AG04449 (cell line): ENCODE measurements at regions of chr12 and their contacts with region 1.

Region 1: GRCh38 chr12:69254046-69254445 is 14.7 kb downstream of the CPSF6 start:
- DNase-seq: no peak
- H3K4me3 ChIP-seq: no peak overlapping the region
- CTCF ChIP-seq: peak; percentile 24

Region 2: GRCh38 chr12:69243099-69244084 is 10.7 kb before region 1 on chr12:
- CTCF ChIA-PET with region 1: interaction called, 28 read pairs
- POLR2A ChIA-PET with region 1: no interaction called
- DNase-seq: no peak
- H3K4me3 ChIP-seq: no peak overlapping the region
- CTCF ChIP-seq: no peak

Region 3: DNA sequence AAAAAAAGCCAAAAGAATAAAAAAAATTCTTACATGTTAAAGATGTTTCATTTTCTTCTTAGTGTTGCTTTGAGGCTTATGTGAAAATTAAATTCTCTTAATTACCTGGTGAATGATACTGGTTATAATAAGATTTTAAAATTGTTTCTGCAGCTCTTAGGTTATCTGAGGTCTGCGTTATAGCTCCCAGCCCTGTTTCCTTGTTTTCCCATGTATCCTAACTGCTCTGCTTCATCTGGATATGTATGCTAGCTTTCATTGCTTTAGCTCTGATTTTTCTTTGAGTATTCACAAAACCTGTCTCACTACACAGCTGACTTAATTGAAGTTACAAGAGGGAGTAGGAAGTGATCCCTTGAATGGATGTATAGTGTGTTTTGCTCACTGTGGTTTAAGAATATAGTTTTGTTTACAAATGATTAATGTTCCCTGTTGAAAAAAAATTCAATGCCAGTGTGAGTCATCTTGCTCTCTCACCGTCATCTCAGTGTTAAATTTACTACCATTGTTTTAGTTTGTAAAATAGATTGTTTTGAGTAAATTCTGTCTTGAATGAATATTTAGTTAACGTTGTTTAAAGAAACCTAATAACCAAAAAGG is 12.1 kb after region 1 on chr12:
- CTCF ChIA-PET with region 1: interaction called, 25 read pairs
- POLR2A ChIA-PET with region 1: no interaction called
- DNase-seq: no peak
- H3K4me3 ChIP-seq: no peak overlapping the region
- CTCF ChIP-seq: no peak